ENCODE measurements at regions of chr19 and their contacts with region 1.

Region 1: DNA sequence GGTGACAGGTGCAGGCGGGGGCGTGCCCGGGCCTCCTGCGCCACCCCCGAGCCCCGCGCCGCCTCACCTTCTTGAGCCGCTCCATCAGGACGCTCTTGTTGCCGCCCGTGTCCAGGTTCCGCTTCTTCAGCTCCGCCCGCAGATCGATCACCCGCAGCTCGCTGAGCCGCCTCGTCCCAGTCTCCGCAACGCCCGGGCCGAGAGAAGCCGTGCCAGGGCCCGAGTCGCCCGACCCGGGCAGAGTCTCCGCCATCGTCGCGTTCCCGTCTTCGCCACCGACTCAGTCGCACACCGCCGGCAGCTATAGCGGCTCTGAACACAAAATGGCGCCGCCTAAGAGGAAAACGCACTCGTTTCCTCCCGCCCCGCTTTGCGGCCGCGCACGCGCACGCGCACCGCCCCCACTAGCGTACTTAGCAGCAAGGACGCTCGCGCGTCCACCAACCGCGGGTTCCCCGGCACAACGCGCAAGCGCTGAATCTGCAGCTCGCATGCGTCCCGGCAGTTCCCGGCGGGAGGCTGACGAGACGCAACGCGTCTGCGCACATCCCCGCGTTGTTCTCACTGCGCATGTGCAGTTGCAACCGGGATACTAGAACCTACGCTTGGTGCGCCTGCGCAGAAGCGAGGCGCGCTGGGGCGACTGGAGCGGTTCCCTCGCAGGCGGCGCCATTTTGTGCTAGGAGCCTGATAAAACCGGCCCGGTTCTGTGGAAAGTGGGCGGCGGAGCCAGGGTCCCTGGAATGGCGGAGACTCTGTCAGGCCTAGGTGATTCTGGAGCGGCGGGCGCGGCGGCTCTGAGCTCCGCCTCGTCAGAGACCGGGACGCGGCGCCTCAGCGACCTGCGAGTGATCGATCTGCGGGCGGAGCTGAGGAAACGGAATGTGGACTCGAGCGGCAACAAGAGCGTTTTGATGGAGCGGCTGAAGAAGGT is at the starts of genes SAFB and SAFB2:
- DNase-seq: peak; percentile 98
- ATAC-seq: peak; percentile 79
- H3K4me3 Mint-ChIP-seq: peak within 1 kb of the TSS; percentile 100
- H3K27ac Mint-ChIP-seq: peak within 1 kb of the TSS; percentile 99
- H3K4me1 Mint-ChIP-seq: peaks cover 77% of the 10 kb centered on the region
- H3K27me3 Mint-ChIP-seq: peaks cover 2% of the 10 kb centered on the region
- CTCF ChIP-seq: no peak
- total RNA-seq, gene SAFB: 162 and 171 TPM in 2 replicates
- total RNA-seq, gene SAFB2: 123 and 143 TPM in 2 replicates

Region 2: DNA sequence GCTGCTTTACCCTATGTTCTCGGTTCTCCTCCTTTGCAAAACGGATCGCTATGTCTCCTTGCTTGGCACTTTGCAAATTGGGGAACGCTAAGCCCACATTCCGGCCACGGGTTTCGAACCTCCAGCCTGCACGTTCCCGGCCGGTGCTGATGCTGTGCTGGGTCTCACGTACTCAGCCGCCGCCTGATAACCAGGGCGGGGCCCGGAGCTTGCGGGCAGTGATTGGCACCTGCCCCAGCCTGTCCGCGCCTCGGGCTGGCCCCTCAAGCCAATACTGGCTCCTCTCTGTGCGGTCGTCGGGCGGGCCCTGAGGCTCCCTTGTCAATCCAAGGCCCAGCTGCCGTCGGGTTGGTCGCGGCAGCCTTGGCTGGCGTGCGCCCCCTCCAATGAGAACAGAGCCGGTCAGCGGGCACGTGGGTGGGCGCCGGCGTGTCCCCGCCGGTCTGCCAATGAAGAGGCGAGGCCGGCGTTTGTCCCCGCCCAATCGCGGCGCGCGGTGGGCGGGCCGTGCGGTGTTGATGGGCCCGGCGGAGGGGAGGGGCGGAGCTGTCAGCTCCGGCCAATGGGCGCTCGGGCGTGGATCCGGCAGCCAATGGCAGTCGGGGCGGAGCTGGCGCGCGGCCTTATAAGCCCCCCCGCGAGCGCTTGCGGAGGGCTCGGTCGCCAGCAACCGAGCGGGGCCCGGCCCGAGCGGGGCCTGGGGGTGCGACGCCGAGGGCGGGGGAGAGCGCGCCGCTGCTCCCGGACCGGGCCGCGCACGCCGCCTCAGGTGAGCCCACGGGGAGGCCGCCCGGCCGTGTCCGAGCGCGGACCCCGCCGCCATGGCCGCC is 654.1 kb before region 1 on chr19 and contains the start of gene KDM4B:
- CTCF ChIA-PET with region 1: no interaction called
- POLR2A ChIA-PET with region 1: interaction called, 11 read pairs
- intact Hi-C with region 1: no loop called
- DNase-seq: peak; percentile 99
- ATAC-seq: peak; percentile 89
- H3K4me3 Mint-ChIP-seq: peak within 1 kb of the TSS; percentile 88
- H3K27ac Mint-ChIP-seq: peak within 1 kb of the TSS; percentile 88
- H3K4me1 Mint-ChIP-seq: peaks cover 31% of the 10 kb centered on the region
- H3K27me3 Mint-ChIP-seq: no peaks in the 10 kb centered on the region
- CTCF ChIP-seq: no peak
- total RNA-seq, gene KDM4B: 76.4 and 88.9 TPM in 2 replicates

Region 3: GRCh38 chr19:5205381-5205780 is 417.3 kb before region 1 on chr19:
- CTCF ChIA-PET with region 1: no interaction called
- POLR2A ChIA-PET with region 1: no interaction called
- intact Hi-C with region 1: no loop called
- DNase-seq: no peak
- ATAC-seq: no peak
- H3K4me3 Mint-ChIP-seq: no peak overlapping the region
- H3K27ac Mint-ChIP-seq: no peak overlapping the region
- H3K4me1 Mint-ChIP-seq: no peaks in the 10 kb centered on the region
- H3K27me3 Mint-ChIP-seq: no peaks in the 10 kb centered on the region
- CTCF ChIP-seq: no peak

Region 4: GRCh38 chr19:5530701-5531100 is 92.0 kb before region 1 on chr19:
- CTCF ChIA-PET with region 1: no interaction called
- POLR2A ChIA-PET with region 1: no interaction called
- intact Hi-C with region 1: no loop called
- DNase-seq: no peak
- ATAC-seq: no peak
- H3K4me3 Mint-ChIP-seq: no peak overlapping the region
- H3K27ac Mint-ChIP-seq: no peak overlapping the region
- H3K4me1 Mint-ChIP-seq: no peaks in the 10 kb centered on the region
- H3K27me3 Mint-ChIP-seq: peaks cover 4% of the 10 kb centered on the region
- CTCF ChIP-seq: no peak

Region 5: GRCh38 chr19:5680437-5681368 is 58.0 kb after region 1 on chr19 and contains the starts of genes HSD11B1L and MICOS13:
- CTCF ChIA-PET with region 1: no interaction called
- POLR2A ChIA-PET with region 1: interaction called, 39 read pairs
- intact Hi-C with region 1: loop called (anchors 1 kb)
- DNase-seq: peak; percentile 100
- ATAC-seq: peak; percentile 92
- H3K4me3 Mint-ChIP-seq: peak within 1 kb of the TSS; percentile 96
- H3K27ac Mint-ChIP-seq: peak within 1 kb of the TSS; percentile 100
- H3K4me1 Mint-ChIP-seq: peaks cover 28% of the 10 kb centered on the region
- H3K27me3 Mint-ChIP-seq: peaks cover 2% of the 10 kb centered on the region
- CTCF ChIP-seq: no peak
- total RNA-seq, gene HSD11B1L: 1.4 and 1.5 TPM in 2 replicates
- total RNA-seq, gene MICOS13: 58.0 and 60.8 TPM in 2 replicates

Region 6: GRCh38 chr19:5690125-5690954 is 67.6 kb after region 1 on chr19 and contains the start of gene RPL36:
- CTCF ChIA-PET with region 1: interaction called, 11 read pairs
- POLR2A ChIA-PET with region 1: interaction called, 57 read pairs
- intact Hi-C with region 1: loop called (anchors 1 kb)
- DNase-seq: peak; percentile 99
- ATAC-seq: peak; percentile 48
- H3K4me3 Mint-ChIP-seq: peak within 1 kb of the TSS; percentile 93
- H3K27ac Mint-ChIP-seq: peak within 1 kb of the TSS; percentile 90
- H3K4me1 Mint-ChIP-seq: peaks cover 33% of the 10 kb centered on the region
- H3K27me3 Mint-ChIP-seq: no peaks in the 10 kb centered on the region
- CTCF ChIP-seq: peak; percentile 88
- total RNA-seq, gene RPL36: 1,170 and 1,330 TPM in 2 replicates

Region 7: DNA sequence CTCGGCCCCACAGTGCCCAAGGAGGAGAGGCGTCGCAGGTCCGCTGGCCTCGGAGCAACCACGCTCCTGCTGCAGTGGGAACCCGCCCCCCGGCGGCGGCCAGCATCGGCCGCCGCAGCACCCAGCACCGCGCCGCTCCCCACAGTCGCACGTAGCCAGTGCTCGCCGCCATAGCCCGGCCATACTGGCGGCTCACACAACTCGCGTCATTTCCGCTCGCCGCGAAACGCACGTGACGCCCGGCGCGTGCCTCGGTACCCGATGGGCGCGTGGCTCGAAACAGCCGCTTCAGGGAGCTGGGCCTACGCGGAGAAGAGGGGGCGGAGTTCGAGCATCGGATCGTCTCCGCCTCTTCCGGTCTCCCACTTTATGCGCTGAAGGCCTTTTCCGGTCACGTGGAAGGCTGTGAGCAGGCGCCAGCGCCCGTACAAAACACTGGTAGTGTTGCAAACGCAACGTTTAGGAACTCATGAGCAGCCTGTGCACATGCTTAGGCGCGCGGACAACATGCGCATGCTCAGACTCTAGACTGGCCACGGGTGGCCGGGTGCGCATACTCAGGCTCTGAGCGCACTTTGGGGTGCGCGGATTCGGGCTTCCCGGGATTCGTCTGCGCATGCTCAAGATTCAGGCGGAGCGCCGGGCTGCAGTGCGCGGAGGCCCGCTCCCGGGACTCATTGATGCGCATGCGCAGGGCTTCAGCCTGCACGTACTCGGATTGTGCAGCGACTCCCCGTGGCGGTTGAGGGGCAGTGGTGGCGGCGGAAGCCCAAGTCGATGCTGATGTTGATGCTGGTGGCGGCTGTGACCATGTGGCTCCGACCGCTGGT is 97.4 kb after region 1 on chr19 and contains the starts of genes CATSPERD and LONP1:
- CTCF ChIA-PET with region 1: no interaction called
- POLR2A ChIA-PET with region 1: interaction called, 19 read pairs
- intact Hi-C with region 1: loop called (anchors 1 kb)
- DNase-seq: peak; percentile 94
- ATAC-seq: peak; percentile 87
- H3K4me3 Mint-ChIP-seq: peak within 1 kb of the TSS; percentile 89
- H3K27ac Mint-ChIP-seq: peak within 1 kb of the TSS; percentile 93
- H3K4me1 Mint-ChIP-seq: peaks cover 27% of the 10 kb centered on the region
- H3K27me3 Mint-ChIP-seq: peaks cover 4% of the 10 kb centered on the region
- CTCF ChIP-seq: no peak
- total RNA-seq, gene CATSPERD: not detected in 2 replicates
- total RNA-seq, gene LONP1: 72.9 and 77.5 TPM in 2 replicates

Region 8: DNA sequence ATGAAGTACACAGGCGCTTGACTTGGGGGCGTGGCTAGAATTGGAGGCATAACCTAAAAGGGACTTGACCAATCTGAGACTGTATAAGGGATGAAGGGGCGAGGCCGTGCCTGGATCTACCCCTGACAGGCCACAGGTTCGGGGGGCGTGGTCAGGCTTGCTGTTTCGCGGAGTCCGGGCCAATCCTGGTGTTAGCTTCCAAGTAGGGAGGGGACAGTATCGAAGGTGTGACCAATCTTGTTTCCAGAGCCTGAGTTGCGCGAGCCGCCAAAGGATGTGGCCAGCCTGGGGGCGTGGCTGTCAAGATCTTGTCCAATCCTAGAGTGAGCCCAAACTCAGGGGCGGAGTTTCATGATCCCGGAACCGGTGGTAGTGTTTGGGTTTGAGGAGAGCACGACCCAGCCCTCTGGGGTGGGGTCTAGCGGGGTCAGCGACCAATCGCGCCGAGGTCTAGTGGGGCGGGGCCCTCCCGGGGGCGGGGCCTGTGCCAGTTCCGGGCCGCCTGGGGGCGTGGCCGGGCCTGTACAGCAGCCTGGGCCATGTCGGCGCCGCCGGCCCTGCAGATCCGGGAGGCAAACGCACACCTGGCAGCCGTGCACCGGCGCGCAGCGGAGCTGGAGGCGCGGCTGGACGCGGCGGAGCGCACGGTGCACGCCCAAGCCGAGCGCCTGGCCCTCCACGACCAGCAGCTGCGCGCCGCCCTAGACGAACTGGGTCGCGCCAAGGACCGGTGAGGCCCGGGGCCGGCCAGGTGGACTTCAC is 281.8 kb after region 1 on chr19 and contains the start of gene VMAC:
- CTCF ChIA-PET with region 1: no interaction called
- POLR2A ChIA-PET with region 1: interaction called, 4 read pairs
- intact Hi-C with region 1: loop called (anchors 5 kb)
- DNase-seq: peak; percentile 100
- ATAC-seq: peak; percentile 78
- H3K4me3 Mint-ChIP-seq: peak within 1 kb of the TSS; percentile 95
- H3K27ac Mint-ChIP-seq: peak within 1 kb of the TSS; percentile 98
- H3K4me1 Mint-ChIP-seq: peaks cover 38% of the 10 kb centered on the region
- H3K27me3 Mint-ChIP-seq: no peaks in the 10 kb centered on the region
- CTCF ChIP-seq: no peak
- total RNA-seq, gene VMAC: 11.2 and 13.3 TPM in 2 replicates

Region 9: GRCh38 chr19:5977785-5978605 is 355.3 kb after region 1 on chr19 and contains the start of gene RANBP3:
- CTCF ChIA-PET with region 1: no interaction called
- POLR2A ChIA-PET with region 1: no interaction called
- intact Hi-C with region 1: loop called (anchors 2 kb)
- DNase-seq: peak; percentile 97
- ATAC-seq: peak; percentile 91
- H3K4me3 Mint-ChIP-seq: peak within 1 kb of the TSS; percentile 91
- H3K27ac Mint-ChIP-seq: peak within 1 kb of the TSS; percentile 83
- H3K4me1 Mint-ChIP-seq: peaks cover 52% of the 10 kb centered on the region
- H3K27me3 Mint-ChIP-seq: no peaks in the 10 kb centered on the region
- CTCF ChIP-seq: no peak
- total RNA-seq, gene RANBP3: 77.0 and 98.5 TPM in 2 replicates

Measured in activated B cell treated with CpG ODN at 0.5 μM for 24 hours (primary cell).